ENCODE measurements at regions of chr17 and their contacts with region 1.

Region 1: GRCh38 chr17:15892731-15893657 is 51.9 kb upstream of the ADORA2B start:
- DNase-seq: no peak
- H3K4me3 ChIP-seq: no peak overlapping the region
- H3K27ac ChIP-seq: no peak overlapping the region
- H3K4me1 ChIP-seq: no peaks in the 10 kb centered on the region
- H3K27me3 ChIP-seq: no peaks in the 10 kb centered on the region
- CTCF ChIP-seq: no peak
- EP300 ChIP-seq: no peak
- POLR2A ChIP-seq: no peak
- RAD21 ChIP-seq: no peak

Region 2: GRCh38 chr17:15882058-15882720 is 10.8 kb before region 1 on chr17:
- CTCF ChIA-PET with region 1: interaction called, 13 read pairs
- POLR2A ChIA-PET with region 1: no interaction called
- DNase-seq: peak in 1 of 2 experiments; percentile 61
- H3K4me3 ChIP-seq: no peak overlapping the region
- H3K27ac ChIP-seq: no peak overlapping the region
- H3K4me1 ChIP-seq: no peaks in the 10 kb centered on the region
- H3K27me3 ChIP-seq: no peaks in the 10 kb centered on the region
- CTCF ChIP-seq: peak; percentile 63 to 71 (median 70)
- EP300 ChIP-seq: no peak
- POLR2A ChIP-seq: no peak
- RAD21 ChIP-seq: peak; percentile 39 to 60; a peak in 3 of 4 replicates

Measured in H1 (cell line).